Prostate gland (tissue), 2 donors: ENCODE measurements at regions of chr17 and their contacts with region 1.

Region 1: GRCh38 chr17:54968262-54968987 is at the starts of genes COX11 and STXBP4:
- DNase-seq: peak; percentile 97
- H3K4me3 ChIP-seq: peak within 1 kb of the TSS; percentile 68 to 83
- H3K27ac ChIP-seq: peak within 1 kb of the TSS; percentile 81 to 83
- H3K4me1 ChIP-seq: peaks cover 4% of the 10 kb centered on the region
- H3K27me3 ChIP-seq: no peaks in the 10 kb centered on the region
- CTCF ChIP-seq: peak in 2 of 4 experiments; percentile 40 to 46
- POLR2A ChIP-seq: peak; percentile 75
- total RNA-seq, gene COX11: 33.1 to 82.1 TPM
- total RNA-seq, gene STXBP4: 7.2 to 29.0 TPM

Region 2: GRCh38 chr17:54900457-54901229 is 67.8 kb before region 1 on chr17 and contains the start of gene TOM1L1:
- intact Hi-C with region 1: loop called (anchors 5 kb)
- DNase-seq: peak; percentile 75
- H3K4me3 ChIP-seq: peak within 1 kb of the TSS; percentile 50 to 52
- H3K27ac ChIP-seq: peak within 1 kb of the TSS; percentile 74 to 76
- H3K4me1 ChIP-seq: peaks cover 13% of the 10 kb centered on the region
- H3K27me3 ChIP-seq: no peaks in the 10 kb centered on the region
- CTCF ChIP-seq: peak in 2 of 4 experiments; percentile 39 to 47
- POLR2A ChIP-seq: peak; percentile 50
- total RNA-seq, gene TOM1L1: 52.8 to 81.3 TPM

Region 3: DNA sequence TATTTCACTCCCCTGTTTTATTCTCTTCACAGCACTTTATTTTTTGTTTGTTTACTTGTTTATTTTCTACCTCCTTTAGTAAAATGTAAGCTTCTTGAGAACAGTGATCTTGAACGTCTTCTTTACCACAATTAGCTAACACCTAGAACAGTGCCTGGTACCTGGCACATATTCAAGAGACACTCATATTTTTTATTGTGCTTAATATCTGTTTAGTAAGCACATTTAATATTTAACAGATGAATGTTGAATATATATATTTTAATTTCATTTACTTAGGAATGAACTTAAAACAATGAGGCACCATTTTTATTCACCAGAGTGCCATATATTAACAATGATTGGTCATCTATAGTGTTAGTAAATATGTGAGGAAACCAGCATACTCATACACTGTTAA is 130.3 kb after region 1 on chr17:
- intact Hi-C with region 1: no loop called
- DNase-seq: no peak
- H3K4me3 ChIP-seq: no peak overlapping the region
- H3K27ac ChIP-seq: no peak overlapping the region
- H3K4me1 ChIP-seq: no peaks in the 10 kb centered on the region
- H3K27me3 ChIP-seq: no peaks in the 10 kb centered on the region
- CTCF ChIP-seq: no peak
- POLR2A ChIP-seq: no peak